Lower leg skin (tissue), 4 donors: ENCODE measurements at regions of chr3 and their contacts with region 1.

Region 1: GRCh38 chr3:187745201-187746058 is at the start of gene BCL6:
- DNase-seq: peak; percentile 94 to 98
- H3K4me3 ChIP-seq: peak within 1 kb of the TSS; percentile 94
- CTCF ChIP-seq: no peak
- POLR2A ChIP-seq: peak in 1 of 2 donors; percentile 94
- total RNA-seq, gene BCL6: 193 to 441 (median 282) TPM

Region 2: DNA sequence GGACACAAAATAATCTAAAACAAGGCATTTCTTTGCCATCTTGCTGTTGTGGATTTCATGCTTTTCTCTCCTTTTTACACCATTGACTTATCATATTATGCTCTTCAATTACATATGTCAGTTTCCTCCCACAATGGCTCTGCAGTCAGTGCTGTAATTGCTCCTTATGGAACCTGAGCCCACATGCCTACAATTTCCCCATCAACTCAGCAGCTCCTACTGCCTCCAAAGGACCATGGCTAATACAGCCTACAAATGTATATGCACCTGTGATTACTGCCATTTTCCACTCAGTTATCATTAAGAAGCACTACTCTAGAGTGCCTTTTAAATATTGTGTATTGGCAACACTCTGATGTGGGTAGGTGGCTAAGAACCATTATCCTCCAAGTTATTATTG is 346.5 kb before region 1 on chr3:
- intact Hi-C with region 1: no loop called
- DNase-seq: no peak
- H3K4me3 ChIP-seq: no peak overlapping the region
- CTCF ChIP-seq: no peak
- POLR2A ChIP-seq: no peak

Region 3: DNA sequence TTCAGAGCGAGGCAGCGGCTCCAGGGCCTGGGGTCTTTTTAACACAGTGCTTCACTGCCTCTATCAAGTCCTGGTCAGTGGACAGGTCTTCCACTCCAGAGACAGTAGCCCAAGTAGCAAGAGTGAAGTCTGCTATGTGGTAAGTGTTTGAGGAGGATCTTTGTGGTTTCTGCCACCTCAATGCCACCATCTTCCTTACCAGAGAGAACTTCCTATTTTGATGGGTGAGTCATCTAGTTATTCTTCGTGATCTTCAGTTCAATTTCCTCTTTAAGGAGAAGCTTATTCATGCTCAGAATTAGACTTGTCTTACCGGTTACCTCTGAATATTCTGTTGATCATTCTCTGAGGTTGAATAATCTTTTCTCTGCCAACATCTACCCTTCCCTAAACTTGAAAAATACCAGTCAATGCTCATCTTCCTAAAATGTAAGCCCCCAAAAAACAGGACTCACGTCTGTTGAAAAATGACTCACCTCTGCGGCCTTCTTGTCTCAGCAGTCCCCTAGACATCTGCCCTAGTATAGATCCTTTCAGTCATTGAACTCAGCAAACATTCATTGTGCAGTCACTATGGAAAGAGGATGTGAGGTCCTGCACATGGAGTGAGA is 32.0 kb after region 1 on chr3:
- intact Hi-C with region 1: no loop called
- DNase-seq: peak in 1 of 2 donors; percentile 39
- H3K4me3 ChIP-seq: no peak overlapping the region
- CTCF ChIP-seq: no peak
- POLR2A ChIP-seq: no peak

Region 4: DNA sequence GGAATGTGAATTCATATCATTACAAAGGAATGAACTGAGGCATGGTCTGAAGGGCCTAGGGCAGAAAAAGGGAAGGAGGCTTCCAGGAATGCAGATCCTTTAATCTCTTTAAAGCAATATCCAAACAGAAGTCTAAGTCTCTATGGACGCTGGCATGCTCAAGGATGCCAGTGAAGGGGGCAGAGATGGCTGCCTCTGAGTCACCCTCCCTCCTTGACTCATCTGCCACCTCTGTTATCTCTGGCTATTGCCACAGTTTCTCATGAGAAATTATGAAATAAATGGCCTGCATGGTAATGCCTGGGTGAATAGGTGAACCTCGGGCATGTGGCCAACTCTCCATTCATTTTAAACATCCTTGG is 96.1 kb after region 1 on chr3:
- intact Hi-C with region 1: no loop called
- DNase-seq: no peak
- H3K4me3 ChIP-seq: no peak overlapping the region
- CTCF ChIP-seq: no peak
- POLR2A ChIP-seq: no peak

Region 5: GRCh38 chr3:188049606-188050530 is 304.4 kb after region 1 on chr3:
- intact Hi-C with region 1: loop called (anchors 10 kb)
- DNase-seq: no peak
- H3K4me3 ChIP-seq: no peak overlapping the region
- CTCF ChIP-seq: no peak
- POLR2A ChIP-seq: no peak

Region 6: GRCh38 chr3:188154014-188154808 is 408.8 kb after region 1 on chr3 and contains the start of gene LPP:
- intact Hi-C with region 1: loop called (anchors 5 kb)
- DNase-seq: peak; percentile 68 to 95
- H3K4me3 ChIP-seq: peak within 1 kb of the TSS; percentile 72
- CTCF ChIP-seq: no peak
- POLR2A ChIP-seq: no peak
- total RNA-seq, gene LPP: 45.9 to 81.1 (median 63.0) TPM

Region 7: DNA sequence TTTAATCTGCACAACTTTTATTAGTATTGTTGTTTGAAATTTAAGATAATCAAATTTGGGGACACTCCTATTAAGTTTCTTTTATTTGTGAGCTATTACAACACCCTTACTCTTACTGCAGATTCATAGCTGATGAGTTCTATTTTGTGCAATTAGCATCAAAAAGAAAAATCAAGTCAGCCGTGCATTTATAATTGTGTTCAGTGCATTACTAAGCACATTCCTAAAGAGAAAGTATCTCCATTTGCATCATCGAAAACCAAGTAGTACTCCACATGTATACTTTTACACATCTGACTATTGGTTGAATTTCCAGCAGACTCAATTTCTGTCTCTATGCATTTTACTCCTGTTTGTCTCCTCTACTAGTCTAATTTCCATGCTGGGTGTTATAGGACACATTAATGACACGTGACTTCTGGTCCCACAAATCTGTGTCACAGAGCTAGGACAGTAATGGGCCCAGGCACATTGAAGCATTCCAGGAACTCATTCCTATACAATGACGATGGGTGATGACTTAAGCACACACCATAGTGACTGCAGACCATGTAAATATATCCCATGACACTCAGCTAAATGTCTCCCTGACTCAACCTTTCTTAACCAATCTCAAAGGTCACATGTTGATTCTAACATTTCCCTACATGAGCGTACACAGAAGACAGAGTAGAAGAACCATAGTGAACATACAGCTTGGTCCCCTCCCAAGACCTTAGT is 886.0 kb after region 1 on chr3:
- intact Hi-C with region 1: loop called (anchors 5 kb)
- DNase-seq: no peak
- H3K4me3 ChIP-seq: no peak overlapping the region
- CTCF ChIP-seq: no peak
- POLR2A ChIP-seq: no peak